K562 (cell line): ENCODE measurements at regions of chr1 and their contacts with region 1.

Region 1: DNA sequence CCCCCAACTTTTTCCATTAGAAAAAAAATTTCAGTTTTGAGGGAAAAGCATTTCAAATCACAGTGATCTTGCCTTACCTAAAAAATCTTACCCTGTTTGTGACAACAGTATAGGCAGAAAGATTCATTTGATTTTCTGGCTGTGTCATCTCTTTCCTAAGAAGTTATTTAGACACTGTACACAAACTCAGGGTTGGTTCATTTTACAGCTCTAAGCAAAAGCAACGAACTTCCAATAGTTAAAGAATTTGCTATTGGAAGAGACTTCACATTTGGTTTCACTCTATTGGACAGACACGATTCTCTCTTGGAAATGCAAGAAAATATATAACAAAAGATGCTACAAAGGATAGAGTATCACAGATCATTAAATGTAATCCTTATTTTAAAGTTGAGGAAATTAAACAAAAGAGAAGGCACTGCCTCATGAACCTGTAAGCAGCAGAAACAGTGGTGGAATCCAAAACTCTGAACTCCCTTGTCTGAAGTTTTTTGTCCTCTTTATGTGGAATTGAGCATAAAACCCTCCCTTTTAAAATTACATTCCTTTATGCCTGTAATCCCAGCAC is 20.8 kb downstream of the EYA3 start:
- DNase-seq: no peak
- ATAC-seq: no peak
- H3K4me3 ChIP-seq: no peak overlapping the region
- H3K27ac ChIP-seq: peak overlapping the region; percentile 73; the same call in 1 of the 3 replicates
- H3K4me1 ChIP-seq: peaks cover 10 to 21% of the 10 kb centered on the region in 2 experiments
- H3K27me3 ChIP-seq: no peaks in the 10 kb centered on the region
- CTCF ChIP-seq: no peak
- EP300 ChIP-seq: no peak
- POLR2A ChIP-seq: no peak
- RAD21 ChIP-seq: no peak

Region 2: GRCh38 chr1:28021064-28021463 is 46.5 kb before region 1 on chr1:
- CTCF ChIA-PET with region 1: no interaction called
- POLR2A ChIA-PET with region 1: no interaction called
- in situ Hi-C with region 1: no loop called
- intact Hi-C with region 1: no loop called
- DNase-seq: no peak
- ATAC-seq: no peak
- H3K4me3 ChIP-seq: no peak overlapping the region
- H3K27ac ChIP-seq: 0 out of 3 replicates have a peak overlapping the region, but pooled peaks have one; percentile 4
- H3K4me1 ChIP-seq: 0 out of 5 replicates have a peak, but pooled peaks cover 0 to 2% of the 10 kb centered on the region in 2 experiments
- H3K27me3 ChIP-seq: no peaks in the 10 kb centered on the region
- CTCF ChIP-seq: no peak
- EP300 ChIP-seq: no peak
- POLR2A ChIP-seq: no peak
- RAD21 ChIP-seq: no peak

Region 3: GRCh38 chr1:28056129-28056925 is 11.3 kb before region 1 on chr1:
- CTCF ChIA-PET with region 1: no interaction called
- POLR2A ChIA-PET with region 1: interaction called, 10 read pairs
- in situ Hi-C with region 1: no loop called
- intact Hi-C with region 1: no loop called
- DNase-seq: peak in 1 of 4 experiments; percentile 52
- ATAC-seq: peak; percentile 52
- H3K4me3 ChIP-seq: no peak overlapping the region
- H3K27ac ChIP-seq: peak overlapping the region; percentile 41
- H3K4me1 ChIP-seq: peaks cover 8 to 39% of the 10 kb centered on the region in 2 experiments; a peak in 4 of 5 replicates
- H3K27me3 ChIP-seq: no peaks in the 10 kb centered on the region
- CTCF ChIP-seq: no peak
- EP300 ChIP-seq: peak; percentile 30; the same call in 1 of the 2 replicates
- POLR2A ChIP-seq: no peak
- RAD21 ChIP-seq: no peak

Region 4: DNA sequence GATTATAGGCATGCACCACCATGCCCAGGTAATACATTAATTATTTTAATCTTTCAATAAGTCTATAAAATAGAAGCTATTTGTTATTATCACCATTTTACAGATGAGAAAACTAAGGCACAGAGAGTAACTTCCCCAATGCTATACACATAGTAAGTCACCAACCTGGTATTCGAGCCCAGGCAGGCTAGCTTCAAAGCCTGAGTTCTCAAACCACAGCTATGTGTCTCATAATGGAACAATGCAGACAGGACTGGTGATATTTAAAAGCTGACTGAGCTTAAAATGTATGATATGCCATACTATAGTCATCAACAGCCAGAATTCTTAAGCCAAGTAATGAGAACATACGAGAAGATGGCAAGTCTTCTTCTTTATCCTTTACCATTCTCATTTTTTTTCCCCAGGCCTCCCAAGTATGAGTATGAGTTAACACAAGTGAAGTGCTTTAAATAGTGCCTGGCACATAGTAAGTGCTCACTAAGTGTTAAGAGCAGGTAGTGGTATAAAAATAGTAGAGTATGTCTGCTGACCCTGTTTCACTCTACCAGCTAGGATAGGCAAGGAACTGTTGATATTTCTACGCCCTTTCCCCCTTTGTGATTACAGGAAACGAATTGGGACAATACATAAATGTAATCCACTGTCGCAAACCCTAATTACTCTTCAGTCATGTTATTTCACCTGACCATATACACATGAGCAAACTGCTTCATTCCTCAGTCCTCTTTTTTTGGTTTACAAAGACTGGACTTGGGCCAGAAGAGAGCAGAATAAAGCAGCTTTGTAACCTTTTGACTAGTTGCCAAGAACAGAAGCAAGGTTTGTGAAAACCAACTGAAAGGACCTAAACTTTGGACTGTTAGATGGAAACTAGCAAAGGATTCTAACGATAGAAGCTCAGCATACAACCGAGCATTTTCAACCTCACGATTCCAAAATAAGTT is 11.3 kb after region 1 on chr1:
- CTCF ChIA-PET with region 1: no interaction called
- POLR2A ChIA-PET with region 1: interaction called, 14 read pairs
- in situ Hi-C with region 1: no loop called
- intact Hi-C with region 1: no loop called
- DNase-seq: no peak
- ATAC-seq: no peak
- H3K4me3 ChIP-seq: no peak overlapping the region
- H3K27ac ChIP-seq: peak overlapping the region; percentile 7; the same call in 1 of the 3 replicates
- H3K4me1 ChIP-seq: peaks cover 4 to 14% of the 10 kb centered on the region in 2 experiments; a peak in 4 of 5 replicates
- H3K27me3 ChIP-seq: no peaks in the 10 kb centered on the region
- CTCF ChIP-seq: no peak
- EP300 ChIP-seq: no peak
- POLR2A ChIP-seq: no peak
- RAD21 ChIP-seq: no peak